ENCODE measurements at regions of chr2 and their contacts with region 1.

Region 1: GRCh38 chr2:236180831-236181453 is 12.8 kb upstream of the GBX2 start:
- DNase-seq: peak in 1 of 6 donors; percentile 25
- ATAC-seq: peak in 3 of 4 donors; percentile 35 to 62 (median 61)
- H3K4me3 ChIP-seq: no peak overlapping the region
- H3K27ac ChIP-seq: no peak overlapping the region
- H3K4me1 ChIP-seq: peaks cover 0 to 5% (median 3%) of the 10 kb centered on the region in 3 donors
- H3K27me3 ChIP-seq: peaks cover 12 to 51% (median 17%) of the 10 kb centered on the region in 4 donors
- CTCF ChIP-seq: peak; percentile 11 to 51 (median 30)

Region 2: DNA sequence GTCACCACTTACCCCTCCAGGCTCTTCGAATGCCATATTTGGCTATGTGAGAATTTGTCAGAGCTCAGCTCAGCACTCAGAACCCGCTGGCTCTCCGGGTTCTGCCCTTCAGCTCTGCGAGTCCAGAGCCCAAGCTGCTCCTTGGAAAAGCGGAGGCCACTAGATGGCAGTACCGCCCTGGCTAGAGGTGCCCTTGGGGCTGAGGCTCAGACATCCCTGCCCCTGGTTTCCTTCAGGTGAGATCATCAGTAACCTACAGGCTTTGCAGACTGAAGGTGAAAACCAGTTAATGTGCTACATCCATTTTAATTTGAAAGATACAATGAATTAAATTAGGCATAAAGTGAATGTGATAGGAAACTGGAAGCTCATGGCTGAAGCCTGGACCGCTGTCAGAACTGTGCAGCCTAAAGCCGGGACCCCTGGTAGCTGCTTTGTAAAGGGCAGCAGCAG is 401.5 kb before region 1 on chr2:
- intact Hi-C with region 1: loop called in 1 of 3 experiments (anchors 5 kb)
- DNase-seq: peak; percentile 52 to 87 (median 76)
- ATAC-seq: peak; percentile 91 to 99 (median 97)
- H3K4me3 ChIP-seq: no peak overlapping the region
- H3K27ac ChIP-seq: no peak overlapping the region
- H3K4me1 ChIP-seq: no peaks in the 10 kb centered on the region
- H3K27me3 ChIP-seq: no peaks in the 10 kb centered on the region
- CTCF ChIP-seq: peak; percentile 64 to 78 (median 70)

Region 3: GRCh38 chr2:236352761-236353593 is 172.0 kb after region 1 on chr2:
- intact Hi-C with region 1: no loop called
- DNase-seq: peak in 1 of 6 donors; percentile 27
- ATAC-seq: peak in 3 of 4 donors; percentile 69 to 77 (median 70)
- H3K4me3 ChIP-seq: no peak overlapping the region
- H3K27ac ChIP-seq: no peak overlapping the region
- H3K4me1 ChIP-seq: no peaks in the 10 kb centered on the region
- H3K27me3 ChIP-seq: no peaks in the 10 kb centered on the region
- CTCF ChIP-seq: peak; percentile 22 to 74 (median 70)

Measured in pancreas (tissue), 10 donors.